ENCODE measurements at regions of chr2 and their contacts with region 1.

Region 1: GRCh38 chr2:86453836-86454235 is 12.7 kb downstream of the KDM3A start:
- DNase-seq: peak; percentile 63
- H3K4me3 ChIP-seq: no peak overlapping the region
- H3K27ac ChIP-seq: no peak overlapping the region
- H3K4me1 ChIP-seq: no peaks in the 10 kb centered on the region
- H3K27me3 ChIP-seq: no peaks in the 10 kb centered on the region
- CTCF ChIP-seq: no peak
- POLR2A ChIP-seq: no peak

Region 2: GRCh38 chr2:86274918-86275275 is 178.9 kb before region 1 on chr2:
- CTCF ChIA-PET with region 1: no interaction called
- POLR2A ChIA-PET with region 1: no interaction called
- dilution Hi-C with region 1: no loop called
- intact Hi-C with region 1: no loop called
- DNase-seq: no peak
- H3K4me3 ChIP-seq: no peak overlapping the region
- H3K27ac ChIP-seq: no peak overlapping the region
- H3K4me1 ChIP-seq: peaks cover 7% of the 10 kb centered on the region
- H3K27me3 ChIP-seq: peaks cover 4 to 16% of the 10 kb centered on the region in 2 experiments
- CTCF ChIP-seq: no peak
- POLR2A ChIP-seq: no peak

Region 3: DNA sequence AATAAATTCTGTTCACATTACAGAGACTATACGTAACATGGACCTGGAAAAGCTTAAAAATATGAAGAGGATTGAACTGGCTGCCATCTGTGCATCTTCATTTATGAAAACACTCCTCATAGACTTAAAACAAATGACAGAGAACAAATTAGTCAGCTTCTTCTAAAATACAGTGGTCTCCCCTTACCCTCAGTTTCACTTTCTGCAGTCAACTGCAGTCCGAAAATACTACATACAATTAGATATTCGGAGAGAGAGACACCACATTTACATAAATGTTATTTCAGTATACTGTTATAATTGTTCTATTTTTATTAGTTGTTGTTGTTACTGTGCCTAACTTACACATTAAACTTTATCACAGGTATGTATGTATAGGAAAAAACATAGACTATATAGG is 163.3 kb after region 1 on chr2:
- CTCF ChIA-PET with region 1: no interaction called
- POLR2A ChIA-PET with region 1: no interaction called
- dilution Hi-C with region 1: loop called (anchors 10 kb)
- intact Hi-C with region 1: no loop called
- DNase-seq: no peak
- H3K4me3 ChIP-seq: no peak overlapping the region
- H3K27ac ChIP-seq: no peak overlapping the region
- H3K4me1 ChIP-seq: peaks cover 12% of the 10 kb centered on the region
- H3K27me3 ChIP-seq: no peaks in the 10 kb centered on the region
- CTCF ChIP-seq: no peak
- POLR2A ChIP-seq: no peak